Endothelial cell of umbilical vein (primary cell): ENCODE measurements at regions of chr12 and their contacts with region 1.

Region 1: DNA sequence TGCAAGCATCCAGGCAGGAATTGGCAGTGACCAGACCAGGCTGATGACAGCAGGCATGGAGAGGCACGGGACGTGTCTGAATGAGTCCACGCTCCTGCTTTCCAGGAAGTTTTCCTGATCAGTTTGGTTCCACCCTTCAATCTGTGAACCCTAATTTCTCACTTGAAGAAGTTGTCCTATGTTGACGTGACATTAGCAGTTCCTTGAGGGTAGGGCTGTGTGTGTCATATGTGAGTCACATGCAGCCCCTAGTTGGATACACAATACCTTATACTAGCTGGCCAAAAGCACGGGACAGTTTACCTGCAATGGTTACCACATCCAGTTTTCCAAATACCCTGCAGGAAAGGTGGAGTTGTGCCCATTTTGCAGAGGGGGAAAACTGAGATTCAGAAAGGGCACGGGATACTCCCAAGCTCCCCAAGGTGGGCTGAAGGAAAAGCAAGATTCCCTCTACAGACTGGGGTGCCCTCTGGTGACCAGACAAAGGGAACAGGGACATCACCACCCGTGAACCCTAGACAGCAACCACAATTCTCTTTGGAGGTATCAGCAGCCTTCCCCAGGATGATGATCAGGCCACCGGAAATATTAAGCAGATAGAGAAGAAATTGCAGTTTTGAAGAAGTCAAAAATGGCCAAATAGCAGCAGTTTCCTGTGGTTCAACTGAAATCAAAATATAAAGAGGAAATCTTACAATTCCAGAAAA is 194.5 kb downstream of the PHETA1 start:
- DNase-seq: no peak
- H3K4me3 ChIP-seq: no peak overlapping the region
- H3K27ac ChIP-seq: no peak overlapping the region
- H3K4me1 ChIP-seq: no peaks in the 10 kb centered on the region
- H3K27me3 ChIP-seq: no peaks in the 10 kb centered on the region
- CTCF ChIP-seq: no peak
- POLR2A ChIP-seq: no peak

Region 2: DNA sequence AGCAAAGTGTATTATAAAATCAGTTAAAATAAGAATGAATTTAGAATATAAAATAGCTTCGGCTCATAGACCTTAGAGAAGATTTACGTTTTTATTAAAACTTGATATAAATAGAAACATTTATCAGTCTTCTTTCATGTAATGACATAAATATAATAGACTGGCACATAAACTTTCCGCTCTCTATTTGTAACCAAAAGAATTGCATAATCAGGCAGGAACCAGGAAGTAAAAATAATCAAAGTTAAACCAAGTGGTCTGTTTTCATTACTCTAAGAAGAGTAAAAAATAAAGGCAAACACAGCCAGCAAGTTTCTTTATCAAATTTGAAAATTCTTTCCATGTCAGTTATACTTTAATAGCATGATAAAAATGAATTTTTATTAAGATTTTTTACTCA is 939.7 kb before region 1 on chr12:
- CTCF ChIA-PET with region 1: no interaction called
- POLR2A ChIA-PET with region 1: no interaction called
- dilution Hi-C with region 1: no loop called
- intact Hi-C with region 1: no loop called
- DNase-seq: no peak
- H3K4me3 ChIP-seq: no peak overlapping the region
- H3K27ac ChIP-seq: no peak overlapping the region
- H3K4me1 ChIP-seq: no peaks in the 10 kb centered on the region
- H3K27me3 ChIP-seq: no peaks in the 10 kb centered on the region
- CTCF ChIP-seq: no peak
- POLR2A ChIP-seq: no peak

Region 3: GRCh38 chr12:110937104-110937641 is 237.2 kb before region 1 on chr12:
- CTCF ChIA-PET with region 1: no interaction called
- POLR2A ChIA-PET with region 1: no interaction called
- dilution Hi-C with region 1: no loop called
- intact Hi-C with region 1: loop called (anchors 5 kb)
- DNase-seq: peak; percentile 56
- H3K4me3 ChIP-seq: no peak overlapping the region
- H3K27ac ChIP-seq: no peak overlapping the region
- H3K4me1 ChIP-seq: no peaks in the 10 kb centered on the region
- H3K27me3 ChIP-seq: no peaks in the 10 kb centered on the region
- CTCF ChIP-seq: peak; percentile 94 to 98
- POLR2A ChIP-seq: no peak